MCF 10A (cell line): ENCODE measurements at regions of chr3 and their contacts with region 1.

Region 1: GRCh38 chr3:55330355-55330754 is 156.8 kb downstream of the WNT5A start:
- DNase-seq: peak; percentile 92
- H3K4me3 Mint-ChIP-seq: no peak overlapping the region
- H3K27ac Mint-ChIP-seq: peak overlapping the region; percentile 93
- H3K4me1 Mint-ChIP-seq: peaks cover 35% of the 10 kb centered on the region
- H3K27me3 Mint-ChIP-seq: no peaks in the 10 kb centered on the region
- CTCF ChIP-seq: no peak

Region 2: DNA sequence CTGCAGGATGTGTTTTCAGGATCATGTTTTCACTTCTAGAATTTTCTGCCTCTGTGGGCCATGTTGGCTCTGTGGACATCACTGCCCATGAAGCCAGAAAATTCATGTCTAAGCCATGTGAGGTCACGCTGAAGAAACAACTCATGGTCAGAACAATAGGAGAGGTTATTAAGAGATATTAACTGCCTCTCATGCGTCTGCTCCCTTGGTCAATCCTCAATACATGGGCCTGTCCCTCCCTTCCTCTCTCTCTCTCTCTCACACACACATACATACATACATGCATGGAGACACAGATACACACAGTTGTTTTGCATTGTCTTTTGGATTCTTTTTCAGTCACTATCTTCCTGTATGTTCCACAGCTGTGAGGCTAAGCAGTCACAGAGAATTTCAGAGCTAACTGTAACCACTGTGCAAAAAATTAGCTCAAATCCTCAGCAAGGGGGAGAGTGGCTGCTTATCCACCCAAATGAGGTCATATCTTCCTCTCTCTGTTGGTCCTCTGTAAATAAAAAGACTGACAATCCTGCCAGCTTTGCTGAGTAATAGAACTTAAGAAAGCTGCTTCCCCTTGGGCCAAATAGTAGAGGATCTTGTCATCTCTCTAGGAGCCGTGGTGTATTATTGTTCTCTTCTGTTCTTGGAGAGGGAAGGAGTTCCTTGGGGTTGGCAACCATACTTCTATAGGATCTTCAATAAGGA is 448.1 kb before region 1 on chr3:
- CTCF ChIA-PET with region 1: no interaction called
- POLR2A ChIA-PET with region 1: no interaction called
- intact Hi-C with region 1: loop called (anchors 10 kb)
- DNase-seq: peak; percentile 88
- H3K4me3 Mint-ChIP-seq: no peak overlapping the region
- H3K27ac Mint-ChIP-seq: peak overlapping the region; percentile 49
- H3K4me1 Mint-ChIP-seq: peaks cover 24% of the 10 kb centered on the region
- H3K27me3 Mint-ChIP-seq: no peaks in the 10 kb centered on the region
- CTCF ChIP-seq: no peak

Region 3: GRCh38 chr3:55189359-55189801 is 141.0 kb before region 1 on chr3:
- CTCF ChIA-PET with region 1: no interaction called
- POLR2A ChIA-PET with region 1: no interaction called
- intact Hi-C with region 1: loop called (anchors 5 kb)
- DNase-seq: peak; percentile 72
- H3K4me3 Mint-ChIP-seq: no peak overlapping the region
- H3K27ac Mint-ChIP-seq: no peak overlapping the region
- H3K4me1 Mint-ChIP-seq: peaks cover 14% of the 10 kb centered on the region
- H3K27me3 Mint-ChIP-seq: no peaks in the 10 kb centered on the region
- CTCF ChIP-seq: no peak

Region 4: GRCh38 chr3:55416351-55416821 is 86.0 kb after region 1 on chr3:
- CTCF ChIA-PET with region 1: no interaction called
- POLR2A ChIA-PET with region 1: no interaction called
- intact Hi-C with region 1: loop called (anchors 5 kb)
- DNase-seq: peak; percentile 94
- H3K4me3 Mint-ChIP-seq: no peak overlapping the region
- H3K27ac Mint-ChIP-seq: no peak overlapping the region
- H3K4me1 Mint-ChIP-seq: peaks cover 14% of the 10 kb centered on the region
- H3K27me3 Mint-ChIP-seq: no peaks in the 10 kb centered on the region
- CTCF ChIP-seq: no peak

Region 5: DNA sequence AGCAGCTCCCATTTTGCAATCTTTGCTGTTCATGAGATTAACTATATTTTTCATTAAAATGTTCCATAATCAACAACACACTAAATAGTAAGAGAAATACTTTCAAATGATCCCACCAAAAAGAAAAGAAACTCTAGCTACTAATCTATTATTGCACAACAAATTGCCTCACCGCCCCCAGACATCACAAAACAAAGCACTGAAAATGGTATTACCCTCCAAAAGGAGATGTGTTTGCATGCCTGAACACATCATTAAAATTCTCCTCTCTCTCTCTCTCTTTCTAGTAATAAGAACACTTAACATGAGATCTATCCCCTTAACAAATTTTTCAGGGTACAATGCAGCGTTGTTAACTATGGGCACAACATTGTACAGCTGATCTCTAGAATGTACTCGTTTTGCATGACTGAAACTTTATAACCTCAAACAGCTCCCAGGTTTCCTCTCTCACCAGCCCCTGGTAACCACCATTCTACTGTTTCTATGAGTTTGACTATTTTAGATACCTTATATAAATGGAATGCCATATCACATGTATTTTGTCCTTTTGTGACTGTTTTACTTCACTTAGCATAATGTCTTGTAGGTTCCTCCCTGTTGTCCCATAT is 123.6 kb after region 1 on chr3:
- CTCF ChIA-PET with region 1: no interaction called
- POLR2A ChIA-PET with region 1: no interaction called
- intact Hi-C with region 1: no loop called
- DNase-seq: no peak
- H3K4me3 Mint-ChIP-seq: no peak overlapping the region
- H3K27ac Mint-ChIP-seq: no peak overlapping the region
- H3K4me1 Mint-ChIP-seq: peaks cover 9% of the 10 kb centered on the region
- H3K27me3 Mint-ChIP-seq: no peaks in the 10 kb centered on the region
- CTCF ChIP-seq: no peak

Region 6: GRCh38 chr3:55467099-55467498 is 136.7 kb after region 1 on chr3:
- CTCF ChIA-PET with region 1: no interaction called
- POLR2A ChIA-PET with region 1: no interaction called
- intact Hi-C with region 1: loop called (anchors 5 kb)
- DNase-seq: peak; percentile 28
- H3K4me3 Mint-ChIP-seq: no peak overlapping the region
- H3K27ac Mint-ChIP-seq: no peak overlapping the region
- H3K4me1 Mint-ChIP-seq: peaks cover 12% of the 10 kb centered on the region
- H3K27me3 Mint-ChIP-seq: no peaks in the 10 kb centered on the region
- CTCF ChIP-seq: no peak